ENCODE measurements at regions of chr11 and their contacts with region 1.

Region 1: GRCh38 chr11:62787005-62787759 is at the start of gene TMEM179B:
- DNase-seq: peak; percentile 86
- H3K4me3 ChIP-seq: peak within 1 kb of the TSS; percentile 95
- CTCF ChIP-seq: peak; percentile 62

Region 2: DNA sequence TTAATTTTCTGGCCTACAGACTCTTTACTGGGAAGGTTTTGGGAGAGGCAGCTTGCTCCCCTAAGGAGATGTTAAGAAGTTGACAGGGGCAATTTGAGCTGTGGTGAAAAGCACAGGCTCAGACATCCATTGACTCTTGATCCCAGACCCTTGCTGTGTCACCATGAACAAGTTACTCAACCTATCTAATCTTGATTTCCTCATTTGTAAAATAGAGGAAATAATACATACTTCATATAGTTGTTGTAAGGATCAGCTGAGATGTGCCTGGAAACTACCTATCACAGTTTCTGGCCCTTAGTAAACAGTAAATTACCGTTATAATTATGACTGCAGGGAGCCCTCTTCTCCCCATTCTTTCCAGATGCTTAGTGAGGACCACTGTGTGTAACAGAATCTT is 471.8 kb before region 1 on chr11:
- CTCF ChIA-PET with region 1: no interaction called
- POLR2A ChIA-PET with region 1: no interaction called
- DNase-seq: no peak
- H3K4me3 ChIP-seq: no peak overlapping the region
- CTCF ChIP-seq: no peak

Region 3: GRCh38 chr11:62678770-62679696 is 108.1 kb before region 1 on chr11 and contains the start of gene UBXN1:
- CTCF ChIA-PET with region 1: interaction called, 19 read pairs
- POLR2A ChIA-PET with region 1: no interaction called
- DNase-seq: no peak
- H3K4me3 ChIP-seq: peak within 1 kb of the TSS; percentile 95
- CTCF ChIP-seq: no peak

Region 4: GRCh38 chr11:62737196-62737595 is 50.0 kb before region 1 on chr11:
- CTCF ChIA-PET with region 1: interaction called, 12 read pairs
- POLR2A ChIA-PET with region 1: no interaction called
- DNase-seq: no peak
- H3K4me3 ChIP-seq: no peak overlapping the region
- CTCF ChIP-seq: no peak

Region 5: DNA sequence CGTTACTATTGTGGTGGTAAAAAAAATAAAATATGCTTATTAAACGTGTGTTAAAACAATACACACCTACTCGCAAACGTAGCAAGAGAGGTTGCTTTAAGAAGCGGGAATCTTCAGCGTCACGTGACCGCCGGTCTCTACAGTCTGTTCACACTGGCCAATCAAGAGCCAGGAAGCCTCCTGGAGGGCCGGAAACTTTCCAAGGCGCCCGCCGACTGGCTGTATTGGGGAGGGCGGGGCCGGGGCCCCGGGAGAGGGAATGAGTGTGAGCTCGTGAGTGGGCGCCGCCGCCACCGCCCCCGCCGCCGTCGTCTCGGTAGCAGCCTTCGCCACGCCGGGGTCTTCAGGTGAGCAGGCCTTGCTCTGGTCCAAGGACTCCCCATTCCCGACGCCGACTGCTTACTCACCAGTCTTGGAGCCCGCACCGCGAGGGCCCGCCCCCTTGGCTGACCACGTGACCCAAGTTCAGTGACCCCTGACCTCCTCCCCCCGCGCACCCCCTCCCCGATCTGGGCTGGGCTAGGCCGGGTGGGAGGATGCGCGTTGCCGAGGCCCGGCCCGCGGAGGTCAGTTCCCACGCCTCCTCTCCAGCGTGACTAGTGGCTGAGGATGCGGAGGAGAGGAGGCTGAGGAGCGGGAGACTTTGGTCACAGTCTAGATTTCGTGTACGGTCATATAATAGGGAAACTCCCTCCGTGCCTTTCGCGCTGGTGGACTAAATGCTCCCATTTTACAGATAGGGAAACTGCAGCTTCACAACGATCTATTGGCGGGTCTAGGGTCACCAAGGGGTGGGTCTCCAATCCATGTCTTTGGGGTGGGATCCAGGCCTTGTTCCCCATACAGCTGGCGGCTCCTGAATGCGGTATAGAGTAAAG is 15.8 kb before region 1 on chr11 and contains the start of gene TAF6L:
- CTCF ChIA-PET with region 1: interaction called, 189 read pairs
- POLR2A ChIA-PET with region 1: interaction called, 16 read pairs
- DNase-seq: peak; percentile 71
- H3K4me3 ChIP-seq: peak within 1 kb of the TSS; percentile 86
- CTCF ChIP-seq: no peak

Region 6: DNA sequence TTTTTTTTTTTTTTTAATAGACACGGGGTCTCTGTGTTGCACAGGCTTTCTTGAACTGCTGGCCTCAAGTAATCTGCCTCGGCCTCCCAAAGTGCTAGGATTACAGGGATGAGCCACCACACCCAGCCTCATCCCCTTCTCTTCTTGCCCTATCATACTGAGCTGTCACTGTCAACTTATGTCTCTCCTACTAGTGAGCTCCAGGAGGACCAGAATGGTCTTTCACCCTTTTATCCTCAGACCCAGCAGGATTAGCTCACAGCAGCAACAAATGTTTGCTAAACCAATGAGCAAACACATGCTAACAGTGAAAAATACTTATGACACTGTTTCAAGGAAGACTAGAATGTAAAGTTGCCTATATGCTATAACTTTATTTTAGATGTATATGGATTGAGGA is 24.5 kb after region 1 on chr11:
- CTCF ChIA-PET with region 1: interaction called, 13 read pairs
- POLR2A ChIA-PET with region 1: interaction called, 3 read pairs
- DNase-seq: no peak
- H3K4me3 ChIP-seq: no peak overlapping the region
- CTCF ChIP-seq: no peak

Region 7: DNA sequence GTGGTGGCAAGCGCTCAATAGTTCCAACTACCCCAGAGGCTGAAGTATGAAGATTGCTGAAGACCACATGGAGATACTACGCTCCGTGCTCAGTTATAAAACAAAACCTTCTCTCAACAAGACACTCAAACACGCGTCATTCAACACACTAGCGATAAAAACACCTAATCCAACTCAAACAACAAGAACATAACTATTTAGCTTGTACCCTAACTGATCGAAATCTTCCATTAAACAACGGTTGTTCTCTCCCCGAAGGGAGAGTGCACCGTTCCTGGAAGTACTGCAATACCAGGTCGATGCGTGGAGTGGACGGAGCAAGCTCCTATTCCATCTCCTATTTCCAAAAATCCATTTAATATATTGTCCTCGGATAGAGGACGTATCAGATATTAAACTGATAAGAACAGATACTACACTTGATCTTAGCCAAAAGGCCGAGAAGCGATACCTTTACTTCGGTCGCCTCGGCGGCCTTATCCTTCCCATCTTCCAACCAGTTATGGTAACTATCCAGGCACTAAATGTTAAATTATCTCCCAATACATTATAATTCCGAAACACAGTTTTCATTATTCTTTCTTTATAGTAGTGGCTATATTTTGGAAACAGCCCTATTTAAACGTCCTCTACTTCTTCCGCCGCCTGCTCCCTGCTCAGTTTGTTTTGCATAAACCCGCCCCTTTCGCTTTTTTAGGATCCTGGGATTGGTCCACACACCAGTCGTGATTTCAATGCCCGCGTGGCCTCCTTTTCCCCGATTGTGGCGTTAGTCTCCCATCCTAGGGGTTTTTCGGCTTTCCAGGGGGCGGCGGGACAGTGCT is 54.4 kb after region 1 on chr11:
- CTCF ChIA-PET with region 1: interaction called, 9 read pairs
- POLR2A ChIA-PET with region 1: interaction called, 41 read pairs
- DNase-seq: peak; percentile 99
- H3K4me3 ChIP-seq: peak overlapping the region; percentile 49
- CTCF ChIP-seq: no peak

Region 8: GRCh38 chr11:62860835-62861563 is 73.8 kb after region 1 on chr11:
- CTCF ChIA-PET with region 1: interaction called, 70 read pairs
- POLR2A ChIA-PET with region 1: interaction called, 10 read pairs
- DNase-seq: no peak
- H3K4me3 ChIP-seq: no peak overlapping the region
- CTCF ChIP-seq: no peak

Region 9: DNA sequence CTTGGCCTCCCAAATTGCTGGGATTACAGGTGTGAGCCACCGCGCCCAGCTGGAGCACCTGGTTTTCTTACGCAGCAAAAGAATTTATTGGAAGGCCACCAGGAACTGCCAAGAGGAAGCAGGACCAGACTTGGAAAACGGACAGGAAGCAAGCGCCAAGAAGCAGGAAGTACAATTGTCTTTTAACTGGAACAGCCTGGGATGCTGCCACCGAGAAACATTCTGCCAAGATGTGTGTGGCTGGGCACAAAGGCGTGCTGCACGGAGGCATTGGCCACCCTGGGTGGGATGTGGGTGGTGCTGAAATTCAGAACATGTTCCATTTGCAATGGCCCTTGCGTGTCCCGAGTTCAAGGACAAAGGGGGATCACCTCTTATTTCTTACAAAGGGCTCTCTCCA is 108.9 kb after region 1 on chr11:
- CTCF ChIA-PET with region 1: no interaction called
- POLR2A ChIA-PET with region 1: no interaction called
- DNase-seq: no peak
- H3K4me3 ChIP-seq: no peak overlapping the region
- CTCF ChIP-seq: no peak

Measured in AG04449 (cell line).